Naive thymus-derived CD8-positive, alpha-beta T cell (primary cell): ENCODE measurements at regions of chr7 and their contacts with region 1.

Region 1: DNA sequence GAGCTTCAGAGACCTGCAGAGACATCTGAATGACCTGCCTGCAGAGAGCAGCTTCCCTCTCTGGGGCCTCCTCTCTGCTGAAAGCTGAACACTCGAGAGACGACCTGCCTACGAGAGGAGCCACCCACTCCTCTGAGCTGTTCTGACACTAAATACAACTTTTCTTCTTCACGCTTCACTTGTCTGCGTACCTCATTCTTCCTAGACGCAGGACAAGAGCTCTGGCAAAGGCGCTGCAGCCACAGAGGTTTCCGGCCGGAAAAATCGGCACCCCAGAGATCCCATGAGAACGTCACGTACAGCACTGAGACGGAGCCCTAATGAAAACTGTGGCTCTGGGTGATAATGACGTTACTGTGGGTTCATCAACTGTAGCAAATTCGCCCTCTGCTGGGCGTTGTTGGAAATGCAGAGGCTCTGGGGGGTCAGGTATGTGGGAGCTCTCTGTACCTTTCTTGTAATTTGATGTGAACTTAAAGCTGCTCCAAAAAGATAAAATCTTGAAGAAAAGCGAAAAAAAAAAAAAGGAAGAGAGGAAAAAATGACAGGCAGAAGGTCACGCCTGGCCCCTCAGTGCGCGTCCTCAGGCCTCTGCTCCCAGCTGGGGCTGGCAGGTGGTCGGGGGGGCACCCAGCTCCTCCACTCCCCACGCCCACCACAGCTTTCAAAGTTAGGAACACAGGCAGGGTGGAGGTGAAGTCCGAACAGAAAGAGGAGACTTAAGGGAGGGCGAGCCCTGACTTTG is 120.7 kb downstream of the DYNC2I1 start:
- DNase-seq: peak; percentile 79 to 97 (median 88)
- ATAC-seq: peak; percentile 75 to 82
- H3K4me3 Mint-ChIP-seq: peak overlapping the region; percentile 81 to 97 (median 91)
- H3K27ac Mint-ChIP-seq: peak overlapping the region; percentile 80 to 97 (median 92)
- H3K4me1 Mint-ChIP-seq: peaks cover 7 to 24% (median 19%) of the 10 kb centered on the region in 4 donors
- H3K27me3 Mint-ChIP-seq: peaks cover 0 to 2% (median 0%) of the 10 kb centered on the region in 5 donors

Region 2: GRCh38 chr7:158695726-158696452 is 281.1 kb before region 1 on chr7:
- POLR2A ChIA-PET with region 1: interaction called, 10 read pairs
- DNase-seq: peak in 9 of 10 donors; percentile 34 to 78 (median 51)
- ATAC-seq: peak; percentile 98 to 99
- H3K4me3 Mint-ChIP-seq: peak overlapping the region in 8 of 10 donors; percentile 28 to 62 (median 52)
- H3K27ac Mint-ChIP-seq: peak overlapping the region in 7 of 10 donors; percentile 33 to 78 (median 71)
- H3K4me1 Mint-ChIP-seq: peaks cover 6 to 12% (median 11%) of the 10 kb centered on the region in 4 donors
- H3K27me3 Mint-ChIP-seq: no peaks in the 10 kb centered on the region